Prostate gland (tissue), 2 donors: ENCODE measurements at regions of chr5 and their contacts with region 1.

Region 1: DNA sequence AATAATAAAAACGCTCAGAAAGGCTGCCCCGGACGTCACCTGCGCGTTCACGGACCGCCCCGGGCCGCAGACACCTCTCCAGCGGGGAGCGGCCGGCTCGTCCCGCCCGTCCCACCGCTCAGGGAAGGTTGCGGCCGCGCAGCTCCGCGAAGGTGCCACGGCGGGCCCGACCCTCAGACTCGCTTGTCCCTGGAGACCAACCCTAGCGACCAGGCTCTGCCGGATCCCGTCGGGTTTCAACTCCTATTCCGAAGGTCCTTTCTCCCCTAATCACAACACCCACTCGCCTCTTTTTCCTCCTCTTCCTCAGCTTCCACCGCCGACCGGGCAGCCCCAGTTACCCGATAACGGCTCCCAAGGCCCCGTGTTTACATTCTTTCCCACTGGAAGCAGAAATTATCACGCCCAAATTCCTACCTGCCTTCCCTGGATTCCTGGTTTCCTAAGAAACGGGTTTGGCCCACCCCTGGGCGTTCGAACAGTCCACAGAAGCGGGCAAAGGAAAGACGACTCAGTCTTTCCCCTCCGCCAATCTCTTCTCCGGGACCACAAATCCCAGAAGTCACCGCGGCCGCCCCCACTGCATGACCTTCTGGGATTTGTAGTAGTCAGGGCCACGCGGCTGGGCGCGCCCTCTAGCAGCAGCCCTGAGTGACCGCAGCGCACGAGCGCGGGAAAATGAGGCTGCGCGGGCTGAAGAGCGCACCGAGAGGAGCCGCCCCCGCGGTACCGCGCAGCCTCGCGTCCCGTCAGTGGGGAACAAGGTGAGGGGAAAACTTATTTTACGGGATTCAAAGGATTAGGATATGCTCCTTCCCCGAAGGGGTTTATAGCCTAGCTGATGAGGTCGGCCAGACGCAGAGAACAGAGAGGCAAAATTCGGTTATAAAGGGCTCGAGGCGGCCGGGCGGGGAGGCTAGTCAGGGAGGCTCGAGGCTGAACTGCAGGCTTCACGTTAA is at the start of gene TTC33:
- DNase-seq: peak; percentile 95
- H3K4me3 ChIP-seq: peak within 1 kb of the TSS; percentile 77 to 86
- H3K27ac ChIP-seq: peak within 1 kb of the TSS; percentile 94
- H3K4me1 ChIP-seq: no peaks in the 10 kb centered on the region
- H3K27me3 ChIP-seq: no peaks in the 10 kb centered on the region
- CTCF ChIP-seq: peak; percentile 55 to 76 (median 76)
- POLR2A ChIP-seq: peak; percentile 40
- total RNA-seq, gene TTC33: 11.9 to 17.6 TPM

Region 2: DNA sequence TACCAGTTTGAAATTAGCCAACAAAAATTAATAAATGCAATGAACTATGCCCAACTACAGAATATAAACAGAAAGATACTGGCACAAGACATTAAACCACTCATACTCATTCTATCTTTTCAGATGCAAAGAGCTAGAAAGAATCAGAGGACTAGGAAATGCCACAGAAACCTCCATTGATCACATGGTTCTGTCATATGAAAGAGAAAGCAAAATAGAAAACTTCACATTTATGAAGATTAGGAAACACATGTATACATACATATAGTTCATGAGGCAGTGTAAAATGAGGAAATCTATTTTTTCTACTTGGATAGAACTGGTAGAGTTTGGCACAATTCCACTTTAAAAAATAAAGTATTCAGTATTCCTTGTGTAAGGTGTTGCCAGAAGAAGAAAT is 351.1 kb before region 1 on chr5:
- intact Hi-C with region 1: no loop called
- DNase-seq: no peak
- H3K4me3 ChIP-seq: no peak overlapping the region
- H3K27ac ChIP-seq: no peak overlapping the region
- H3K4me1 ChIP-seq: no peaks in the 10 kb centered on the region
- H3K27me3 ChIP-seq: no peaks in the 10 kb centered on the region
- CTCF ChIP-seq: no peak
- POLR2A ChIP-seq: no peak

Region 3: DNA sequence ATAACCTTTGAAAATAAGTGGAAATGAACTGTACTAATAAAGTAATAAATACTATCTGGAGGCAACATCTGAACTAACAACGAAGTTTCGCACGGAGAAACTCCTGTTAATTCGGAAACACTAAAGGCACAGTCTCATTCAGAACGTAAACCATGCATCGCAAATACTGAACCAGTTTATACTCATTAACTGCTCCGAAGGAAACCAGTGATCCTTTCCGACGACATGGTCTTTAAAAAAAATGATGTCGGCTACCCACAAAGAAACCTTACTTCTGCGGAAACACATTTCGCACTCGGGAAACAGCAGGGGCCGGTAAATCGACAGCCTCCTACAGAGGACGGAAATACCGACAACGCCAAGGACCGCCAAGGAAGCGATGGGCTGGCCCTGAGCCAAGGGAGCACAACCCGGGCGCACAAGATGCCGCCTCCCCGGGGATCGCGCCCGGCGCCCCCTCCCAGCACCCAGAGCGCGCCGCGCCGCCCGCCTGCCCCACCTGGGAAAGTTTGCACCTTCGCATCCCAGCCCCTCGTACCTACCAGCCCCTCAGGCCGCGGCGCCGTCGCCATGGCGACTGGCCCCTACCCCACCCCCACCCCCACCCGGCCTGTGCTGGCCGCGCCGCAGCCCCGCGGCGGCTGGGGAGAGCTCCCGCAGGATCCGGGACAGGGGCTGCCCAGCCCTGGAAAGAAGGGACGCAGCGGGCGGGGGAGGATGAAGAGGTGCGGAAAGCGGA is 41.8 kb after region 1 on chr5:
- intact Hi-C with region 1: loop called (anchors 1 kb)
- DNase-seq: peak; percentile 51
- H3K4me3 ChIP-seq: peak overlapping the region; percentile 87 to 89
- H3K27ac ChIP-seq: peak overlapping the region; percentile 94 to 97
- H3K4me1 ChIP-seq: peaks cover 8% of the 10 kb centered on the region
- H3K27me3 ChIP-seq: no peaks in the 10 kb centered on the region
- CTCF ChIP-seq: no peak
- POLR2A ChIP-seq: no peak

Region 4: DNA sequence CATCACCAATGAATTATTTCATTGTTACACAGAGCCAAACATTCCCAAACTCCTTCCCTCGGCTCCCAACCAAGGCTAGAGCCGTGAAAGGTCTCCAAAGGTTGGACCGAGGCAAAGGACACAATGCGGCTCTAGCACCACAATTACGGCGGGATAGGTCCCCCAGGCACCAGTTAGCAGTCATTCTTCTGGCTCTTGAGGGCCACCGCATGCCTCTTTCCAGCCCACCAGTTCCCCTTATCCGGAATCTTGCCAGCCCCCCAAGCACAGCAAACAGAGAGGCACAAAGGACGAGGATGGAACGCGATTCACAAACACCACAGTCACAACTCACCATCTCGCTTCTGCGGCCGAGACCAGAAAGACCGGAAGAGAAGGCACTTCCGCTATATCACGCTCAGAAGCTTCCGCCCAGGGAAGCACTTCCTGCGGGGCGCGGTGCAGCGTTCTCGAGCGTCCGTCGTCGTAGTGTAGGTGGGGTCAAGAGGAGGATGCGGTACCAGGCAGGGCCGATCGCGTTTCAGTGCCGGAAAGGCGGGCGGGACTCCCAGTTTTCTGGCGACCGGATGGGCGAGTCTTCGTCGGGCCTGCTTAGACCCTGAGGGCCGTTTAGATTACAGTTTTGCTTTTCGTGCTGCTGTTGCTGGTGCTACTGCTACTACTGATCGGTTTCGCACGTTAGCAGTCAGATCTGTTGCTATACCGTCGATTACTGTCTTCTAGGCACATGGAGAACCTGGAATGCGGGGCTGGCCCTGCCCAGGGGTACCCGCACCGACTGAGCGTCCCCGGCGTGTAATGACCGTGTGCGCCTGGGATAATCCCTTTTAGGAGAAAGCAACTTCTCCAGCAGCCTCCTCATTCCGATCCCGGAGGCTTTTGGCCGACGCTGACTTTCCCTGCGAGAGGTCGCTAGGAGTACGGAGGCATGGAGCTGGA is 79.4 kb after region 1 on chr5 and contains the start of gene RPL37:
- intact Hi-C with region 1: loop called (anchors 2 kb)
- DNase-seq: peak; percentile 95
- H3K4me3 ChIP-seq: peak within 1 kb of the TSS; percentile 59 to 61
- H3K27ac ChIP-seq: peak within 1 kb of the TSS; percentile 89 to 90
- H3K4me1 ChIP-seq: no peaks in the 10 kb centered on the region
- H3K27me3 ChIP-seq: no peaks in the 10 kb centered on the region
- CTCF ChIP-seq: peak in 2 of 4 experiments; percentile 24 to 26
- POLR2A ChIP-seq: peak; percentile 62
- total RNA-seq, gene RPL37: 188 to 343 TPM

Region 5: GRCh38 chr5:40882291-40882690 is 126.6 kb after region 1 on chr5:
- intact Hi-C with region 1: loop called (anchors 5 kb)
- DNase-seq: no peak
- H3K4me3 ChIP-seq: no peak overlapping the region
- H3K27ac ChIP-seq: no peak overlapping the region
- H3K4me1 ChIP-seq: no peaks in the 10 kb centered on the region
- H3K27me3 ChIP-seq: no peaks in the 10 kb centered on the region
- CTCF ChIP-seq: no peak
- POLR2A ChIP-seq: no peak